ENCODE measurements at regions of chr2 and their contacts with region 1.

Region 1: GRCh38 chr2:47639467-47639866 is 143.5 kb upstream of the MSH6 start:
- DNase-seq: peak; percentile 44
- ATAC-seq: peak; percentile 81
- H3K4me3 ChIP-seq: no peak overlapping the region
- H3K27ac ChIP-seq: no peak overlapping the region
- H3K4me1 ChIP-seq: peaks cover 10% of the 10 kb centered on the region
- H3K27me3 ChIP-seq: no peaks in the 10 kb centered on the region
- CTCF ChIP-seq: no peak

Region 2: DNA sequence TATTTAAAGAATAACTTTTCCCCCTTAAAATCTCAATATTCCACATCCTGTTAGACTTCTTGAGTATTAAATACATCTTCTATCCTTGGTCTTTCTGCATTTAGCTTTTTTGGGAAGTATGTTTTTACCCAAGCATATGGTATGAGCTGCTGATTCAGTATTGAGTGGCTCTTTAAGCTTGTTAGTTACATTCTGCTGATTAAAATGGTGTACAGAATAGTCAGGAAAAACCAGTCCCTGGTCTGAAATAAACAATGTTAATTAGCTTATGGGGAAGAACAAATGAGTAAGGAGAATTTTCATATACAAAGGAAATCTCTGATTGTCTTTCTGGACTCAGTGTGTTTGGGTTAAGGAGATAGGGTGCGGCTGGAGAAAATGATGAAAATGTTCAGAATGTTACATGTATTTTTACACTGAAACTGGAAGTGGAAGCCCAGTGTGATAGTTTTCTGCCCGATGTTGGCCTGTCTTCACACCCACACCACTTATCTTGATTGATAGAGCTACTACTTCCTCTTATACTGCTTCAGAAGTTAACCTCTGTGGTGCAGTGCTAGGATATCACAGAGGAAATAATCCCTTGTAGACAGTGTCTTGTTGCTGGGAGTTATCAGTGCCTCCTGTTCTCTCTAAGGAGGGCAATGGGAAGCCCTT is 152.5 kb before region 1 on chr2:
- CTCF ChIA-PET with region 1: no interaction called
- POLR2A ChIA-PET with region 1: no interaction called
- intact Hi-C with region 1: no loop called
- DNase-seq: no peak
- ATAC-seq: no peak
- H3K4me3 ChIP-seq: no peak overlapping the region
- H3K27ac ChIP-seq: no peak overlapping the region
- H3K4me1 ChIP-seq: peaks cover 12% of the 10 kb centered on the region
- H3K27me3 ChIP-seq: no peaks in the 10 kb centered on the region
- CTCF ChIP-seq: no peak

Region 3: DNA sequence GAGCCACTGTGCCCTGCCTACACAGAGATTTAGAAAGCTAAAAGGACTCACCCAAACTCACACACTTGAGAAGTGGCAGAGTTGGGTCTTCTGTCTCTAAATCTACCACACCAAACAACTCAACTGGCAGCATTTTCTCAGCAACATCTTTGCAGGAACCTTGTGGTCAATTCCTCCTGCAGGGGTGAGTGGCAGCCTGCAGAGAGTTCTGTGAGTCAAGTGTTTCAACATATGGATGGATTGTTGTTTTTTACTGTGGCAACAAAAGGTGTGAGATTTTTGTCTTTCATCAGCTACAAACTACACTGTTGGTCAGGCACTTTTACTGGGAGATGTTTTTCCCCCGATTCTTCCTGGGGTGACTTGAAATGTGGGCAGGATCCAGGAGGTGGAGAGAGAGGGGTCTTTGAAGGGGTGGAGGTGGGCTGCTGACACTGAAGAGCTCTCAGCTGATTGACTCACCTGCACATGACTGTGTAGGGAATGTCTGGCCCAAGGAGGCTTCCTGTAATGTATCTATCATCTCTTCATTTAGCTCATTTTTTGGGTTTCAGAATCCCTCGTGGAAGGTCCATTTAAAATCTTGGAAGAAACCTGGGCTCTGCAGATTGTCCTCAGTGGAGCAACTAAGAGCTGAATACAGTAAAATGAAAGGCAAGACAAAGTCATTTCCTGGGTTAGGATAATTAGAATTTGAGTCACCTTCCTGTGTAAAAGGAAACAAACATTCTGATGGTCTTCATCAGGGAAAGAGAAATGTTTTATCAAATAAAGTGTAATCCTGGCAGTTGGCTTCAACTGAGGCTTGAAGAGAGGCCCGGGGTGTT is 137.9 kb before region 1 on chr2:
- CTCF ChIA-PET with region 1: no interaction called
- POLR2A ChIA-PET with region 1: interaction called, 42 read pairs
- intact Hi-C with region 1: no loop called
- DNase-seq: peak; percentile 63
- ATAC-seq: peak; percentile 92
- H3K4me3 ChIP-seq: no peak overlapping the region
- H3K27ac ChIP-seq: peak overlapping the region; percentile 77
- H3K4me1 ChIP-seq: peaks cover 13% of the 10 kb centered on the region
- H3K27me3 ChIP-seq: no peaks in the 10 kb centered on the region
- CTCF ChIP-seq: no peak

Region 4: GRCh38 chr2:47719099-47719498 is 79.6 kb after region 1 on chr2:
- CTCF ChIA-PET with region 1: no interaction called
- POLR2A ChIA-PET with region 1: no interaction called
- intact Hi-C with region 1: no loop called
- DNase-seq: no peak
- ATAC-seq: no peak
- H3K4me3 ChIP-seq: no peak overlapping the region
- H3K27ac ChIP-seq: no peak overlapping the region
- H3K4me1 ChIP-seq: peaks cover 1% of the 10 kb centered on the region; the same call in 1 of the 2 replicates
- H3K27me3 ChIP-seq: no peaks in the 10 kb centered on the region
- CTCF ChIP-seq: no peak

Region 5: DNA sequence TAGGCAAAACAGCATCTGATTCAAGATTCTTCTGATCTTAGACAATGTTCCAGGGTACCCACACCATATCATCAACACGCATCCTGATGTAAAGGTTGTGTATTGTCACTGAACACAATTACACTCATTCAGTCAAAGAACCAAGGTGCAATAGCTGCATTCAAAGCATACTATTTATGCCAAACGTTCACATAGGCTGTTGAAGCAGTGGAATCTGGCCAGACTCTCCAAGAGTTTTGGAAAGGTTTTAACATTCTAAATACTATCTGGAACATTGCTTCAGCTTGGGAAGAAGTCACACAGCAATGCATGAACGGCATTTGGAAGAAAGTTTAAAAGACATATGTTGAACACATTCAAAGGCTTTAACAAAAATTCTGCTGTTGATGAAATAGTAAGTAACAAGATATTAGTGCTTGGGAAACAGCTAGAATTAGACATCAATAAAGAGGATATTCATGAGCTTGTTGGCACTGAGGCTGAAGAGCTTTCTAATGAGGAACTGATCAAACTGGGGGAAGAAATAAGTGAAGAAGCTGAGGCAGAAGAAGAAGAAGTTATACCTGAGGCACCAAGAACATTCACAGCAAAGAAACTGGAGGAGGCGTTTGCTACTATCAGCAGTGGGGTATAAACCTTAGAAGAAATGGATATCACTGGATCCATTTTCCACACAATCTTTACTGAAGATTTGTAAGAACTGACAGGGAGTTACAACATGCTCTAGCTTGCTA is 95.8 kb after region 1 on chr2:
- CTCF ChIA-PET with region 1: no interaction called
- POLR2A ChIA-PET with region 1: no interaction called
- intact Hi-C with region 1: no loop called
- DNase-seq: no peak
- ATAC-seq: no peak
- H3K4me3 ChIP-seq: no peak overlapping the region
- H3K27ac ChIP-seq: no peak overlapping the region
- H3K4me1 ChIP-seq: no peaks in the 10 kb centered on the region
- H3K27me3 ChIP-seq: peaks cover 25% of the 10 kb centered on the region
- CTCF ChIP-seq: no peak